GM12878 (cell line): ENCODE measurements at regions of chr17 and their contacts with region 1.

Region 1: DNA sequence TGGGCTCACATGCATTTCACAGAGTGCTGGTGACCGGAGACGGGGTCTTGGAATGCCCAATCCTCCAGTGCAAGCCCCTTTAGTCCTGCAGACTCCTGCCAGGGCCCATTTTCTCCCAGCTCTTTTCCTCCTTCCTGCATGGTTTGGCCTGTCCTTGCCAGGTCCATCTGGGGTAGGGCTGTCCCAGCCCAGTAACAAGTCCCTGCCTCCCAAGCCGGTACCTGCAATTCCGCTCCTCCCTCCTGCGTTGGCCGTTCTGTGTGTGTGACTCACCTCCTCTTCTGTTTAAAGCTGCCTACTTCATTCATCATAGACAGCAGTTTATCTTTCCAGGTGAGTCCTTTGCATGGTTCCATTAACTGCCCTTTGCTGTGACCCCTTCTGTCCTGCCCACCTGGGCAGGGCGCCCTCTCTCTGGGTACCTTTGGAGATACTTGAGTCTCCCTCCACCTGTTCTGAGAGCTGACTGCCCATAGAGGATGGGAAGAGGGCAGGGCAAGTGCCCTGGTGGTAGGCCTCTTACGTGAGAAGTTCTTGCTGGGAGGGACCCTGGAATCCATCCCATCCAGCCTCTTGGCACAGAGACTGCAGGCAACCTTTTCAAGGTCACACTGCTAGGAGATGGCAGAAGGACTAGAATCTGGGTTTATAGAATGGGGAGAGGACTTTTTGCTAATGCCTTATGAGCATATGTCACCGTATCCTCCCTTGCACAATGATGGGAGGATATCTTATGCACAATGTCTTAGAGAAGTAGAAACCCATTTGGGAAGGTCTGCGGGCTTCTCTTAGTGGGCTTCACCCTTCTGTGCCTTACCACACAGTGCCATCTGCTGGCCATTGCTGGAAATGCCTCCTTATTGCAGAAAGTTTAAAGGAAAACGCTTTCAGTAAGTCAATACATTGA is 29.7 kb upstream of the LGALS9 start:
- DNase-seq: peak; percentile 51
- ATAC-seq: peak; percentile 53
- H3K4me3 ChIP-seq: no peak overlapping the region
- H3K27ac ChIP-seq: no peak overlapping the region
- H3K4me1 ChIP-seq: peaks cover 5% of the 10 kb centered on the region; the same call in 1 of the 2 replicates
- H3K27me3 ChIP-seq: no peaks in the 10 kb centered on the region
- CTCF ChIP-seq: peak; percentile 85 to 98 (median 97)
- EP300 ChIP-seq: no peak
- POLR2A ChIP-seq: no peak
- RAD21 ChIP-seq: peak; percentile 95

Region 2: DNA sequence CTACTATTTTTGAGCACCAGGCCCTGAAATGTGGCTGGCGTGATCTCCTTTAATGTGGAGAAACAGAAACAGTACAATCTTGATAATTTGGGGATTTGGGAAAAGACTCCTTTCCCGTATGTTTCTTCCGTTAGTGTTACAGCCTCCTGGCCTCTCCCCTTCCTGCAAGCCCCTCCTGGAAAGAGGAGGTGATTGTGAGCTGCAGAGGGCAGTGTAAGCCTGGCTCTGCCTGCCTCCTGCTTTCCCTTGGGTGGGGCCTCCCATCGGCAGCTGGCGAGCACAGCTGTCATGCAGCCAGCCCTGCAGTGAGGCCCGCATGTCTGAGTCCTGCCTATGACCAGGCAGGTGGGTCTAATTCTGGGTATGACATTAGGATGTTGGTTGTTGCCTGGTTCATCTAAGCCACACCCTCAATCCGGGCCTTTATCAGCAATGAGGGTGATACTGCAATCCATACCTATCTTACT is 356.1 kb before region 1 on chr17:
- CTCF ChIA-PET with region 1: interaction called, 129 read pairs
- POLR2A ChIA-PET with region 1: no interaction called
- RAD21 ChIA-PET with region 1: interaction called, 11 read pairs
- SMC1A ChIA-PET with region 1: interaction called, 5 read pairs
- in situ Hi-C with region 1: no loop called
- intact Hi-C with region 1: no loop called
- DNase-seq: peak; percentile 51
- ATAC-seq: peak; percentile 94
- H3K4me3 ChIP-seq: no peak overlapping the region
- H3K27ac ChIP-seq: no peak overlapping the region
- H3K4me1 ChIP-seq: peaks cover 28% of the 10 kb centered on the region
- H3K27me3 ChIP-seq: no peaks in the 10 kb centered on the region
- CTCF ChIP-seq: peak; percentile 70 to 96 (median 74); a peak in 5 of 6 replicates
- EP300 ChIP-seq: no peak
- POLR2A ChIP-seq: no peak
- RAD21 ChIP-seq: peak; percentile 93

Region 3: GRCh38 chr17:27381007-27381501 is 220.3 kb before region 1 on chr17:
- CTCF ChIA-PET with region 1: interaction called, 109 read pairs
- POLR2A ChIA-PET with region 1: no interaction called
- RAD21 ChIA-PET with region 1: interaction called, 54 read pairs
- SMC1A ChIA-PET with region 1: interaction called, 28 read pairs
- in situ Hi-C with region 1: no loop called
- intact Hi-C with region 1: loop called (anchors 1 kb)
- DNase-seq: peak; percentile 27
- ATAC-seq: peak; percentile 96
- H3K4me3 ChIP-seq: no peak overlapping the region
- H3K27ac ChIP-seq: no peak overlapping the region
- H3K4me1 ChIP-seq: peaks cover 14% of the 10 kb centered on the region
- H3K27me3 ChIP-seq: no peaks in the 10 kb centered on the region
- CTCF ChIP-seq: peak; percentile 100; a peak in 5 of 6 replicates
- EP300 ChIP-seq: no peak
- POLR2A ChIP-seq: no peak
- RAD21 ChIP-seq: peak; percentile 67

Region 4: DNA sequence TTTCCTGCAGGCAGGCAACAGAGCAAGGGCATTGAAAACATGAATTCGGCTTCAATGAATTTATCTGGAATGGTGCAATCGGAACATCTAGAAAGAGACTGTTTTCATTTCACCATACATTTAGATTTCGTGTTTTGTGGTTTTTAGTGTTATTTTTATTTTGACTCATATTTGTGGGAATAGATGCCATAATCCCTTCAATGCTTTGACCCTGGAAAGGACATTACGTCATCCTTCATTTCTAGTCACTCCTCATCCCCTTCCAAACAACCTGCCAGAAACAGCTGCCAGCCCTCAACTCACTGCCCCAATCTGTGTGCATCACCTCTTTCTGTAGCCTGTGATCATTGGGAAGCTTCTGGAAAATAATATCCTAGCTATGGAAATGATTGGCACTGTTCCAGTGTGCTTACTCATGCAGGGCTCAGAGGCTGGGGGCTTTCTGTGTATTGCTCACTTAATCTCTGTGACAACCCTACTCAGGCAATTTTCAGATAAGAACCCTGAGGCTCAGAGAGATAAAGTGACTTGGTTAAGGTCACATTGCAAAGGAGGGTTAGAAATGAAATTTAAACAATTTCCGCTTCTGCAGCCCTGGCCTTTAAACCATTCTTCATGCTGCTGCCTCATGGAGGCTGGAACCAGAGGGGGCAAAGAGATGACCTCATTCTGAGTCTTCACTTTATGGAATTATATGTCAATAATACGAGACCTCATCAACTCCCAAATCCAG is 154.6 kb before region 1 on chr17:
- CTCF ChIA-PET with region 1: interaction called, 11 read pairs
- POLR2A ChIA-PET with region 1: no interaction called
- RAD21 ChIA-PET with region 1: interaction called, 4 read pairs
- SMC1A ChIA-PET with region 1: interaction called, 76 read pairs
- in situ Hi-C with region 1: no loop called
- intact Hi-C with region 1: no loop called
- DNase-seq: no peak
- ATAC-seq: no peak
- H3K4me3 ChIP-seq: no peak overlapping the region
- H3K27ac ChIP-seq: no peak overlapping the region
- H3K4me1 ChIP-seq: no peaks in the 10 kb centered on the region
- H3K27me3 ChIP-seq: no peaks in the 10 kb centered on the region
- CTCF ChIP-seq: no peak
- EP300 ChIP-seq: no peak
- POLR2A ChIP-seq: no peak
- RAD21 ChIP-seq: no peak

Region 5: DNA sequence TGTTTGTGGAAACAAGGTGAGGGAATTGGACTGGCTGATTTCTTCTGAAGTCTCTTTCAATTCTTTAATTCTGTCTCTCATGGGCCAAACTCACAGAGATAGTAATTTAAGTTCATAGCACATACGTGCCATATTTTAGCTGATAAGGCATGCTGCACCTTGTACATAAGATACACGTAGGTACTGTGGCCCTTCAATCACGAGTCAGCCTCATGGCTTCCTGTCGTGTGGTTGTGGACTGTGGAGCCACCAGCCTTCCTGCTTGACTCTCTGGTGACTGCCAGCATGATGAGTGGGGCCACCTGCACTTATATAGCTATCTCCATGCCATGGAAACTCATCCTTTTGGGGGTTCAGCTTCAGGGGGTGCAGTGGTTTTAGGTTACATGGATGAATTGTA is 120.0 kb before region 1 on chr17:
- CTCF ChIA-PET with region 1: interaction called, 11 read pairs
- POLR2A ChIA-PET with region 1: no interaction called
- RAD21 ChIA-PET with region 1: interaction called, 13 read pairs
- SMC1A ChIA-PET with region 1: interaction called, 5 read pairs
- in situ Hi-C with region 1: no loop called
- intact Hi-C with region 1: no loop called
- DNase-seq: no peak
- ATAC-seq: peak; percentile 64
- H3K4me3 ChIP-seq: no peak overlapping the region
- H3K27ac ChIP-seq: peak overlapping the region; percentile 43
- H3K4me1 ChIP-seq: peaks cover 39% of the 10 kb centered on the region
- H3K27me3 ChIP-seq: no peaks in the 10 kb centered on the region
- CTCF ChIP-seq: no peak
- EP300 ChIP-seq: peak in 1 of 2 experiments; percentile 28; a peak in 1 of 4 replicates
- POLR2A ChIP-seq: peak; percentile 43; the same call in 1 of the 2 replicates
- RAD21 ChIP-seq: no peak

Region 6: GRCh38 chr17:27569257-27569722 is 32.0 kb before region 1 on chr17:
- CTCF ChIA-PET with region 1: interaction called, 53 read pairs
- POLR2A ChIA-PET with region 1: no interaction called
- RAD21 ChIA-PET with region 1: interaction called, 25 read pairs
- SMC1A ChIA-PET with region 1: interaction called, 12 read pairs
- in situ Hi-C with region 1: no loop called
- intact Hi-C with region 1: no loop called
- DNase-seq: no peak
- ATAC-seq: peak; percentile 96
- H3K4me3 ChIP-seq: no peak overlapping the region
- H3K27ac ChIP-seq: no peak overlapping the region
- H3K4me1 ChIP-seq: no peaks in the 10 kb centered on the region; the same call in 1 of the 2 replicates
- H3K27me3 ChIP-seq: no peaks in the 10 kb centered on the region
- CTCF ChIP-seq: peak; percentile 64 to 78 (median 73)
- EP300 ChIP-seq: no peak
- POLR2A ChIP-seq: no peak
- RAD21 ChIP-seq: peak; percentile 55

Region 7: GRCh38 chr17:27630607-27631410 is 29.5 kb after region 1 on chr17 and contains the start of gene LGALS9:
- CTCF ChIA-PET with region 1: interaction called, 59 read pairs
- POLR2A ChIA-PET with region 1: no interaction called
- RAD21 ChIA-PET with region 1: interaction called, 6 read pairs
- SMC1A ChIA-PET with region 1: interaction called, 10 read pairs
- in situ Hi-C with region 1: no loop called
- intact Hi-C with region 1: no loop called
- DNase-seq: peak; percentile 53
- ATAC-seq: peak; percentile 83
- H3K4me3 ChIP-seq: peak within 1 kb of the TSS; percentile 78
- H3K27ac ChIP-seq: peak within 1 kb of the TSS; percentile 89
- H3K4me1 ChIP-seq: peaks cover 11% of the 10 kb centered on the region
- H3K27me3 ChIP-seq: no peaks in the 10 kb centered on the region
- CTCF ChIP-seq: no peak
- EP300 ChIP-seq: no peak
- POLR2A ChIP-seq: peak; percentile 79
- RAD21 ChIP-seq: no peak
- polyA plus RNA-seq, gene LGALS9: 22.5 to 30.2 TPM

Region 8: GRCh38 chr17:27892866-27893769 is 291.8 kb after region 1 on chr17 and contains the start of gene LYRM9:
- CTCF ChIA-PET with region 1: no interaction called
- POLR2A ChIA-PET with region 1: no interaction called
- RAD21 ChIA-PET with region 1: no interaction called
- SMC1A ChIA-PET with region 1: no interaction called
- in situ Hi-C with region 1: no loop called
- intact Hi-C with region 1: no loop called
- DNase-seq: peak; percentile 48
- ATAC-seq: peak; percentile 99
- H3K4me3 ChIP-seq: peak within 1 kb of the TSS; percentile 65
- H3K27ac ChIP-seq: peak within 1 kb of the TSS; percentile 61
- H3K4me1 ChIP-seq: peaks cover 8% of the 10 kb centered on the region
- H3K27me3 ChIP-seq: no peaks in the 10 kb centered on the region
- CTCF ChIP-seq: peak; percentile 77 to 91 (median 79)
- EP300 ChIP-seq: no peak
- POLR2A ChIP-seq: peak; percentile 72
- RAD21 ChIP-seq: peak; percentile 40
- polyA plus RNA-seq, gene LYRM9: 1.8 to 2.7 TPM